Activated CD4-positive, alpha-beta T cell treated with anti-CD3 and anti-CD28 coated beads for 36 hours (primary cell): ENCODE measurements at regions of chr5 and their contacts with region 1.

Region 1: GRCh38 chr5:151213800-151214613 is 9.9 kb downstream of the CCDC69 start:
- DNase-seq: peak; percentile 92
- ATAC-seq: peak; percentile 89
- H3K4me3 Mint-ChIP-seq: peak overlapping the region; percentile 74
- H3K27ac Mint-ChIP-seq: peak overlapping the region; percentile 97
- H3K4me1 Mint-ChIP-seq: peaks cover 83% of the 10 kb centered on the region
- H3K27me3 Mint-ChIP-seq: no peaks in the 10 kb centered on the region

Region 2: GRCh38 chr5:150789943-150790611 is 423.9 kb before region 1 on chr5:
- CTCF ChIA-PET with region 1: no interaction called
- POLR2A ChIA-PET with region 1: no interaction called
- intact Hi-C with region 1: loop called in 1 of 2 experiments (anchors 2 kb)
- DNase-seq: peak; percentile 88
- ATAC-seq: peak; percentile 98
- H3K4me3 Mint-ChIP-seq: peak overlapping the region; percentile 56
- H3K27ac Mint-ChIP-seq: peak overlapping the region; percentile 88
- H3K4me1 Mint-ChIP-seq: peaks cover 65% of the 10 kb centered on the region
- H3K27me3 Mint-ChIP-seq: no peaks in the 10 kb centered on the region

Region 3: DNA sequence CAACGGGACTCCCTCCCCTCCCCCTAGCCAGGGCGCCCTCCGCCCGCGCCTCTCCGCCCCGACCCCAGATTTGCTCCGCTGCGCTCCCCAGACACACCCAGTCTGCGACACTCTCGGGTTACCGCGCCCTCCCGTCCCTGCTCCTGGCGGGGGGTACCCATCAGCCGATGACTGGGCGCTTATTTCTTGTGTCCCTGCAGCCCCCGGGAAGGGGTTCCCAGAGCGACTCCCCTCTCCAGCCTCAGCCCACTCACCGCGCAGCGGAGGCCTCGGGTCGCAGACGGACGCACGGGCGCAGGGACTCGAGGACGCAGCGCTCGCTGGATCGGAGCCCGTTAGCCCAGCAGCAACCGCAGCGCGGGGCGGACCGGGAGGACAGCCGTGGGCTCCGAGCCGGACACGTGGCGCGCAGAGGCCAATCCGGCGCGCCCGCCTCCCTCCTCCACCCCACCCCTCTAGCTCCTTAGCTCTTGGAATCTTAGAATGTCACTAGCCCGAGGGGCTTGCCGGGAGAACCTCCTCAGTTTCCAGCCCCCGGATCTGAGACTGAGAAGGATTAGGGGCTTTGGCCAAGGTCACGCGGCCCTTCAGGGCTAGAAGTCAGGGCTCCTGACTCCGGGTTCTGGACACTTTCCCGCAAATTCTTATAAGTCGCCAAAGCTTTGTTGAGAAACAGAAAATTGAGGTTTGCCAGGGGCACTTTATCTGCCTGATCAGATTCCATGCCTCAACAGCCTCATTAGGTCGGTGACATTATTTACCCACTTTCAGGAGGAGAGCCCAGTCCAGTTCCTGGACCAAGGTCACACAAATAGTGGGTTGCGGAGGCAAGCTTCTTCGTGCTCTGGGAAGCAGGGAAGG is 56.4 kb before region 1 on chr5 and contains the start of gene ANXA6:
- CTCF ChIA-PET with region 1: interaction called, 3 read pairs
- POLR2A ChIA-PET with region 1: no interaction called
- intact Hi-C with region 1: loop called (anchors 2 kb)
- DNase-seq: peak; percentile 80
- ATAC-seq: peak; percentile 47
- H3K4me3 Mint-ChIP-seq: peak within 1 kb of the TSS; percentile 91
- H3K27ac Mint-ChIP-seq: peak within 1 kb of the TSS; percentile 93
- H3K4me1 Mint-ChIP-seq: peaks cover 59% of the 10 kb centered on the region
- H3K27me3 Mint-ChIP-seq: no peaks in the 10 kb centered on the region
- total RNA-seq, gene ANXA6: 322 to 332 TPM

Region 4: DNA sequence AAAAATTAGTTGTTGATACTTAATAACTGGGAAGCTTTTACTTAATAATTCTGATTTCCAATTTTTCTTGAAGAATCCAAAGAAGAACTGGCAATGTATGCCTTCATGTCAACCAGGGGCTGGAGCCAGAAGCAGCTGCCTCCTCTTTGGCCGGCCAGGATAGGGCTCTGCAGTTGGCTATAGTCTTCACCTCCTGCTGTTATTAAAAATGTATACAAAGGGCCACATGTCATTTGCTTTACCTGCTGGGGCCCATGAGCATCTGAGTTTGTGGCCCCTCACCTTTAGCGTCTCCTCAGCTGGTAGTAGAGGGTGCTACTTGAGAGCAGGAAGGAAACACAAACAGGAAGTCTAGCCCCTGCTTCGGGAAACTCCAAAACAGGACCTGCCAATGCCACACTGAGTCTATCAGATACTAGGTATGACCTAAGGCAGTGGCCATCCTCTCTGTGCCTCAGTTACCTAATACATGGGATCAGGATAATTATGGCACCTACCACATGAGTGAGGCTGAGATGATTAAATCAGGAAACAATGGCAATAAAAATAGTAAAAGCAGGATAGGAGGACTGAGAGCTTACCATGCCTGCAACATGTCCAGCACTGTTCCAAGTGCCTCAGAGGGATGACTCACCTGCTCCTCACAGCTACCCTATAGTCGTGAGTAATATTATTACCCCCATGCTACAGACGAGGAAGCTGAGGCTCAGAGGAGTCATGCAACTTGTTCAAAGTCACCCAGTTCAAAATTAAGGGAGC is 11.4 kb before region 1 on chr5:
- CTCF ChIA-PET with region 1: interaction called, 5 read pairs
- POLR2A ChIA-PET with region 1: no interaction called
- intact Hi-C with region 1: loop called in 1 of 2 experiments (anchors 1 kb)
- DNase-seq: peak; percentile 70
- ATAC-seq: peak; percentile 100
- H3K4me3 Mint-ChIP-seq: no peak overlapping the region
- H3K27ac Mint-ChIP-seq: peak overlapping the region; percentile 75
- H3K4me1 Mint-ChIP-seq: peaks cover 36% of the 10 kb centered on the region
- H3K27me3 Mint-ChIP-seq: no peaks in the 10 kb centered on the region

Region 5: DNA sequence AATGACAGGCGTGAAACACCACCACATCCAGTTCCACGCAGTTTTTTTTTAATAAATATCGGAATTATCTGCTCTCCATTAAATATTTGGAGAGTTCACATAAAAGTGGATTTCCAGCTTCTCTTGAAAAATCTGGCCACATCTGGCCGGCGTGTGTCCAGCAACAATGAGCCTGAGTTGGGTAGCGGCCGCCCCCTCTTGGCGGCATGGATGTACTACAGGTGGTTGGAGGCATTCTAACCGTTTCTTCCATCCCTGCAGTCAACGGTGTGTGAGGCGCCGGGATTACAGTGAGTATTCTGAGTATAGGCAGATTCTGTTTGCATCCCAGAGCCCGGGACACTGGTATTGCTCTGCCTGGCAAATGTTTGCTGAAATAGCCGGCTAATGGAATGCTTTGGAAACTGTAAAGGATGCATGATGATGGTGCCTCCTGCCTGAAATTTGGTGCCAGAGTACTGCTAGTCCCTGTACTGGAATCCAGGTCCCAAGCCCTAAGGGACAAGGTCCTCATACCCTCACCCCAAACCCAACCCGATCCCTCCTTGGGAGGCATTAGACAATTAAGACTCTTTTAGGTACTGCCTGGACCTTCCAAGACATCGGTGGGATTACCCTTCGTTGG is 25.3 kb after region 1 on chr5:
- CTCF ChIA-PET with region 1: interaction called, 15 read pairs
- POLR2A ChIA-PET with region 1: no interaction called
- intact Hi-C with region 1: loop called in 1 of 2 experiments (anchors 2 kb)
- DNase-seq: peak; percentile 82
- ATAC-seq: peak; percentile 71
- H3K4me3 Mint-ChIP-seq: no peak overlapping the region
- H3K27ac Mint-ChIP-seq: no peak overlapping the region
- H3K4me1 Mint-ChIP-seq: peaks cover 29% of the 10 kb centered on the region
- H3K27me3 Mint-ChIP-seq: no peaks in the 10 kb centered on the region

Region 6: GRCh38 chr5:151258811-151259555 is 45.0 kb after region 1 on chr5:
- CTCF ChIA-PET with region 1: no interaction called
- POLR2A ChIA-PET with region 1: no interaction called
- intact Hi-C with region 1: no loop called
- DNase-seq: no peak
- ATAC-seq: no peak
- H3K4me3 Mint-ChIP-seq: no peak overlapping the region
- H3K27ac Mint-ChIP-seq: no peak overlapping the region
- H3K4me1 Mint-ChIP-seq: peaks cover 22% of the 10 kb centered on the region
- H3K27me3 Mint-ChIP-seq: no peaks in the 10 kb centered on the region

Region 7: GRCh38 chr5:151451626-151452520 is 237.9 kb after region 1 on chr5:
- CTCF ChIA-PET with region 1: no interaction called
- POLR2A ChIA-PET with region 1: no interaction called
- intact Hi-C with region 1: no loop called
- DNase-seq: no peak
- ATAC-seq: no peak
- H3K4me3 Mint-ChIP-seq: no peak overlapping the region
- H3K27ac Mint-ChIP-seq: no peak overlapping the region
- H3K4me1 Mint-ChIP-seq: peaks cover 22% of the 10 kb centered on the region
- H3K27me3 Mint-ChIP-seq: no peaks in the 10 kb centered on the region

Region 8: DNA sequence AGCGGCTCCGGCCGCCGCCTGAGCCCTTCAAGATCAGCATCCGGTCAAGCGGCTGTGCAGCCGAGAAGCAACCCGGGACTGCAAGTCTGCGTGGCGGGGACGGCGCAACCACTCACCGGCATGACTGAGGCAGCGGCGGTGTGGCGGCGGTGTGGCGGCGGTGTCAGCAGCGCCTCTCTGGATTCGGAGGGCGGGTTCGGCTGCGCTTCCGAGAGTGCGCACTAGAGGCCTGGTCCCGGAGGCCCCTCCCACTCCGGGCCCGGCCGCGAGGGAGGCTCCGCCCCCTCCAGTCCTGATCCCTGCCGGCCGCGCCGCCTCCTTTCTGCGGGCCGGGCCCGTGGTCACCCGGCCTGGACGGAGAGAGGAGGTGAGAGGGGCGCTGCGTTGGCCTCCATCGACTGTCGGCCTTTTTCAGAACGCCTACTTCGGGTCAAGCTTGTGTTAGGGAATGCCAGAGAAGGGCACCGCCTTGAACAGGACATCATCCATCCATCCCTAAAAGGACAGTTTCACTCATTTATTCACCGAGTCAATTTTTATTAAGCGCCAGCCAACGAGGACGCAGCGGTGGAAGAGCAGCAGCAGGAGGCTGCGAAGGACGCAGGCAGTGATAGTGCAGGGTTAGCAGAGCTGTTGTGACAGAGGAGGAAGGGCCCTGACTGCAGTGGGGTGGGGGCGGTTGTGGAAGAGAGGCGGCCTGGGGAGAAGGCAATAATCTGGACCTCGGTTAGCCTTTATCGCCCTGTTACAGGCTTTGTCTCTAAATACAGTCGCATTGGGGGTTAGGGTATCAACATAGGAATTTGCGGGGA is 544.6 kb after region 1 on chr5 and contains the start of gene ATOX1:
- CTCF ChIA-PET with region 1: no interaction called
- POLR2A ChIA-PET with region 1: no interaction called
- intact Hi-C with region 1: loop called in 1 of 2 experiments (anchors 5 kb)
- DNase-seq: peak; percentile 95
- ATAC-seq: peak; percentile 99
- H3K4me3 Mint-ChIP-seq: peak within 1 kb of the TSS; percentile 98
- H3K27ac Mint-ChIP-seq: peak within 1 kb of the TSS; percentile 98
- H3K4me1 Mint-ChIP-seq: peaks cover 33% of the 10 kb centered on the region
- H3K27me3 Mint-ChIP-seq: no peaks in the 10 kb centered on the region
- total RNA-seq, gene ATOX1: 74.8 to 85.9 TPM